Sigmoid colon (tissue), 7 donors: ENCODE measurements at regions of chr2 and their contacts with region 1.

Region 1: GRCh38 chr2:200471324-200471848 is 38.5 kb downstream of the KCTD18 start:
- DNase-seq: no peak
- H3K4me3 ChIP-seq: no peak overlapping the region
- H3K27ac ChIP-seq: no peak overlapping the region
- H3K4me1 ChIP-seq: peaks cover 0 to 45% (median 16%) of the 10 kb centered on the region in 4 donors
- H3K27me3 ChIP-seq: no peaks in the 10 kb centered on the region
- CTCF ChIP-seq: peak in 3 of 4 experiments; percentile 28 to 53 (median 30)
- EP300 ChIP-seq: no peak
- POLR2A ChIP-seq: no peak

Region 2: DNA sequence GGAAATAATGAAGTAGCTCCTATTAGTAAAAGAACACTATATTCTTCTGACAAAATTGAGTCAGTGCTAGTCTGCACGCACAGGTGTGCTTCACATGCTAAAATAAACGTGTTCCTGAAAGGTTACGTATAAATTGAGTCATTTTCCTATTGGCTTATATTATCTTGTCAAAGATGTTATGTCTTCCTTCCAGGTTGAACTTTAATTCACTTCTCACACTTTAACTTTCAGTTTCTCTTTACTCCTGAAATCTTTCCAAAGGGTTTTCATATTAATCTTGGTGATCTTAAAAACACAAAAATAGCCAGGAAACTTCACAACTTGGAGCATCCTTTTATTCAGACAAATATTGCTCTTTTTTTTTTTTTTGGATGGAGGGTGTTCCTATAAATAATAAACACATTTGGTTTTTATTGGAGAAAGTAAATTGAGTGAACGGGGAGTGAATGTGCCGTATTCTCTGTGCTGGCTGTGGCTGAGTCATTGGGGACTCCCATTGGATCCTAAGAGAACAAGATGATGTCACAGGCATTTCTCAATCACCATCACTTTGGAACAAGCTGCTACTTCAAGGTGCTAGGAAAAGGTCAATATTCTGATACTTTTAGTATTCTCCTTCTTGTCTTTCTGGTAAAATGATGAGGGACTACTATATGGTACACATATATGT is 315.1 kb before region 1 on chr2:
- intact Hi-C with region 1: loop called (anchors 10 kb)
- DNase-seq: no peak
- H3K4me3 ChIP-seq: peak overlapping the region; percentile 13 to 34 (median 26)
- H3K27ac ChIP-seq: peak overlapping the region in 2 of 4 donors; percentile 19 to 33
- H3K4me1 ChIP-seq: peaks cover 0 to 5% (median 0%) of the 10 kb centered on the region in 4 donors
- H3K27me3 ChIP-seq: no peaks in the 10 kb centered on the region
- CTCF ChIP-seq: no peak
- EP300 ChIP-seq: no peak
- POLR2A ChIP-seq: no peak

Region 3: GRCh38 chr2:200383383-200384110 is 87.8 kb before region 1 on chr2:
- intact Hi-C with region 1: loop called (anchors 5 kb)
- DNase-seq: no peak
- H3K4me3 ChIP-seq: peak overlapping the region in 3 of 4 donors; percentile 10 to 22 (median 11)
- H3K27ac ChIP-seq: peak overlapping the region in 2 of 4 donors; percentile 39 to 54
- H3K4me1 ChIP-seq: peaks cover 0 to 41% (median 23%) of the 10 kb centered on the region in 4 donors
- H3K27me3 ChIP-seq: no peaks in the 10 kb centered on the region
- CTCF ChIP-seq: no peak
- EP300 ChIP-seq: no peak
- POLR2A ChIP-seq: no peak